ENCODE measurements at regions of chr21 and their contacts with region 1.

Region 1: GRCh38 chr21:38219049-38219628 is 37.7 kb upstream of the KCNJ15 start:
- DNase-seq: peak; percentile 46
- CTCF ChIP-seq: peak; percentile 94

Region 2: GRCh38 chr21:38054334-38054733 is 164.8 kb before region 1 on chr21:
- in situ Hi-C with region 1: no loop called
- DNase-seq: no peak
- CTCF ChIP-seq: no peak

Region 3: GRCh38 chr21:38333301-38334272 is 114.4 kb after region 1 on chr21:
- in situ Hi-C with region 1: loop called (anchors 10 kb)
- DNase-seq: no peak
- CTCF ChIP-seq: no peak

Measured in GM13976 (cell line).